Mucosa of descending colon (tissue), 3 donors: ENCODE measurements at regions of chr22 and their contacts with region 1.

Region 1: DNA sequence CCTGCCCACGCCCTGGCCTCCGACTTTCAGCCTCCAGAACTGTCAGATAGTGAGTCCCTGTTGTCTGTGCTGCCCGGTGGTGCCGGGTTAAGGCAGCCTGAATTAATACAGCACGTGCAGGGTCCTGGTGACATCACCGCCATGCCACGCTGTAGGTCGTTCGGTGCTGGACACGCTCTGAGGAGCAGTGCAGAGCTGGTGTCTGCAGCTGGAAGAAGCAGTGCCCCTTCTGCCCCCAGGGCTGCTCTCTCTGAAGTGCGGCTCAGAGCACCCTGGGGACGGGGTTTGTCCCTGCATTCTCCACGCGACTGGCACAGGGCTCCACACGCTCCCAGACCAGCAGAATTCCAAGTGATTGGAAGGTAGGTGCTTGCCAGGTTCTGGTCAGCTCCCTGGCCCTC is 831.5 kb downstream of the TBC1D22A start:
- DNase-seq: no peak
- ATAC-seq: no peak
- H3K4me3 ChIP-seq: no peak overlapping the region
- H3K4me1 ChIP-seq: no peaks in the 10 kb centered on the region
- CTCF ChIP-seq: no peak

Region 2: GRCh38 chr22:45612451-45612901 is 1981.4 kb before region 1 on chr22:
- intact Hi-C with region 1: loop called in 1 of 2 experiments (anchors 10 kb)
- DNase-seq: no peak
- ATAC-seq: peak; percentile 42
- H3K4me3 ChIP-seq: no peak overlapping the region
- H3K4me1 ChIP-seq: no peaks in the 10 kb centered on the region
- CTCF ChIP-seq: no peak

Region 3: GRCh38 chr22:47515384-47516122 is 78.4 kb before region 1 on chr22:
- intact Hi-C with region 1: no loop called
- DNase-seq: no peak
- ATAC-seq: no peak
- H3K4me3 ChIP-seq: no peak overlapping the region
- H3K4me1 ChIP-seq: no peaks in the 10 kb centered on the region
- CTCF ChIP-seq: no peak